ENCODE measurements at regions of chr14 and their contacts with region 1.

Region 1: GRCh38 chr14:75982266-75983018 is 647 bp upstream of the TGFB3 start:
- DNase-seq: peak; percentile 93
- H3K4me3 ChIP-seq: peak overlapping the region; percentile 52 to 85 (median 62)
- H3K27ac ChIP-seq: peak overlapping the region; percentile 78 to 92 (median 88)
- H3K4me1 ChIP-seq: peaks cover 19 to 84% (median 69%) of the 10 kb centered on the region in 6 donors
- H3K27me3 ChIP-seq: no peaks in the 10 kb centered on the region
- CTCF ChIP-seq: peak; percentile 11 to 82 (median 49)
- POLR2A ChIP-seq: no peak

Region 2: GRCh38 chr14:75711104-75711795 is 271.2 kb before region 1 on chr14:
- intact Hi-C with region 1: loop called (anchors 5 kb)
- DNase-seq: no peak
- H3K4me3 ChIP-seq: no peak overlapping the region
- H3K27ac ChIP-seq: peak overlapping the region in 4 of 8 donors; percentile 38 to 50 (median 46)
- H3K4me1 ChIP-seq: peaks cover 0 to 9% (median 0%) of the 10 kb centered on the region in 6 donors
- H3K27me3 ChIP-seq: no peaks in the 10 kb centered on the region
- CTCF ChIP-seq: peak in 8 of 11 experiments; percentile 11 to 42 (median 36)
- POLR2A ChIP-seq: no peak

Region 3: DNA sequence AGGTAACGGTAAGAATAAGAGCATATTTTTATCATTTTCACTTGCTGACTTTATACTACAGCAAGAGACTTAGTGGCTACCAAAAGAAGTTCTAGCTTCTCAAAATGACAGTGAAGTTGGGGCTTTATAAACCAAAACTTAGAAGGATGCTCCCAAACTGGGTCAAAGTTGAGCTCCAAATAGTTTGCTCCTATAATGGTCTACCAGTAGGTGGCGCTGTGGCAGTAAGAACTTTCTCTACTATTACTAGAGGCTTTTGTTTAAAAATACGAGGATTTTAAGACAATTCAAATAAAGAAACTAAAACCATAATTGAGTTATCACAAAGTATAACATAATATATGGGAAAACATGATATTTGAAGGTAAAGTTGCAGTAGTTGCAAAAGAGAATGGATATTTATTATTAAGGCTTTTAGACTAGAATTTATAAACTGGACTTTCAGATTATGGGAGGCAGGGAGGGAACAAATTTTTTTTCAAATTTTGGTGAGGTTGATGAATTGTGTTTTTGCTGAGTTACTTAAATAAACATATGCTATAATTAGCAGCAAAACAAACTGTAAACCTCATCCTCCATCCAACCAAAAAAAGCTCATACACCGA is 75.7 kb before region 1 on chr14:
- intact Hi-C with region 1: loop called (anchors 2 kb)
- DNase-seq: no peak
- H3K4me3 ChIP-seq: no peak overlapping the region
- H3K27ac ChIP-seq: no peak overlapping the region
- H3K4me1 ChIP-seq: peaks cover 0 to 23% (median 9%) of the 10 kb centered on the region in 6 donors
- H3K27me3 ChIP-seq: no peaks in the 10 kb centered on the region
- CTCF ChIP-seq: peak; percentile 61 to 92 (median 84)
- POLR2A ChIP-seq: no peak